CD8-positive, alpha-beta T cell (primary cell): ENCODE measurements at regions of chr21 and their contacts with region 1.

Region 1: DNA sequence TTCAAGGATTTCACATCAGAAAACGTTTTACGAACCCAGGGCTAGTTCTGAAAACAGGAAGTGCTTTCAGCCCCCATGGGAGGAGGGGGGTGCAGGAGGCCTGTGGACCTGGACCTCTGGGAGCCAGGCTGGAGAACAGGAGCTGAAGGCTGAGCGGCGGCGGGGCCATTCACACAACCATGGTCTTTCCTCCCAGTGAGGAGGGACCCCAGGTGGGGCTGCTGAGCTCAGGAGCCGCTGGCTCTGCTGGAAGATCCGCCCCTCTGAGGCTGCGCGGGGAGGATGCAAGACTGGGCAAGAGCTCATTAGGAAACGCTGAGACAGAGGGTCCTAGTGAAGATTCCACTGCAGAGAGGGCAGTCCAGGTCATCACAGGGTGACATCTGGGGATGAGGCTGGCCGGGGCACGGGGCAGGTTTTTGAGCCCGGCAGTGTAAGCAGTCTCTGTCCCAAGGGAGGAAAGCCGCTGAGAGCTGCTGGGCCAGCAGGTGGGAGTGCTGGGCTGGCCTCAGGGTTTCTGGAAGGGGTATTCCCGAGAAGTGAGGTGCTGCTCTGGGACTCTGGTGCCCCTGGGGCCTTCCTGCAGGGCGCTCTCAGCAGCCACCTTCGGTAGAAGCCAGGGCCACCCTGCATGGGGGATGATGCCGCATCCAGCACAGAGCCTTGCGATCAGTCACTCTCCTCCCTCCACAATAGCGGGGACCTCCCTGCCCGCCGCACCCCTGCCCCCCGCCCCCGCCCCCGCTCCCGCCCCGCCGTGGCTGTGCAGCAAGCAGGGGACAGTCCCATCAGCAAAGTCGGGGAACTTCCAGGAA is 7.5 kb downstream of the MX2 start:
- DNase-seq: peak in 7 of 9 experiments; percentile 14 to 73 (median 56)
- ATAC-seq: peak; percentile 86
- H3K4me3 ChIP-seq: peak overlapping the region; percentile 55 to 66
- H3K4me3 Mint-ChIP-seq: peak overlapping the region; percentile 85
- H3K27ac ChIP-seq: peak overlapping the region; percentile 57 to 82
- H3K27ac Mint-ChIP-seq: peak overlapping the region; percentile 94
- H3K4me1 ChIP-seq: peaks cover 46% of the 10 kb centered on the region
- H3K4me1 Mint-ChIP-seq: peaks cover 81% of the 10 kb centered on the region
- H3K27me3 ChIP-seq: no peaks in the 10 kb centered on the region
- H3K27me3 Mint-ChIP-seq: no peaks in the 10 kb centered on the region
- CTCF ChIP-seq: no peak

Region 2: GRCh38 chr21:41425954-41426675 is 56.8 kb after region 1 on chr21 and contains the start of gene MX1:
- CTCF ChIA-PET with region 1: no interaction called
- POLR2A ChIA-PET with region 1: interaction called, 22 read pairs
- intact Hi-C with region 1: no loop called
- DNase-seq: peak; percentile 73 to 97 (median 87)
- ATAC-seq: peak; percentile 99
- H3K4me3 ChIP-seq: peak within 1 kb of the TSS; percentile 74 to 94
- H3K4me3 Mint-ChIP-seq: peak within 1 kb of the TSS; percentile 97
- H3K27ac ChIP-seq: peak within 1 kb of the TSS; percentile 72 to 79
- H3K27ac Mint-ChIP-seq: peak within 1 kb of the TSS; percentile 96
- H3K4me1 ChIP-seq: peaks cover 14% of the 10 kb centered on the region
- H3K4me1 Mint-ChIP-seq: peaks cover 40% of the 10 kb centered on the region
- H3K27me3 ChIP-seq: no peaks in the 10 kb centered on the region
- H3K27me3 Mint-ChIP-seq: no peaks in the 10 kb centered on the region
- CTCF ChIP-seq: no peak
- total RNA-seq, gene MX1: 69.1 to 71.0 TPM

Region 3: GRCh38 chr21:42636538-42636930 is 1267.2 kb after region 1 on chr21:
- CTCF ChIA-PET with region 1: no interaction called
- POLR2A ChIA-PET with region 1: no interaction called
- intact Hi-C with region 1: no loop called
- DNase-seq: no peak
- ATAC-seq: no peak
- H3K4me3 ChIP-seq: no peak overlapping the region
- H3K4me3 Mint-ChIP-seq: no peak overlapping the region
- H3K27ac ChIP-seq: no peak overlapping the region
- H3K27ac Mint-ChIP-seq: no peak overlapping the region
- H3K4me1 ChIP-seq: peaks cover 2% of the 10 kb centered on the region
- H3K4me1 Mint-ChIP-seq: no peaks in the 10 kb centered on the region
- H3K27me3 ChIP-seq: no peaks in the 10 kb centered on the region
- H3K27me3 Mint-ChIP-seq: no peaks in the 10 kb centered on the region
- CTCF ChIP-seq: no peak